IMR-90 (cell line): ENCODE measurements at regions of chr2 and their contacts with region 1.

Region 1: DNA sequence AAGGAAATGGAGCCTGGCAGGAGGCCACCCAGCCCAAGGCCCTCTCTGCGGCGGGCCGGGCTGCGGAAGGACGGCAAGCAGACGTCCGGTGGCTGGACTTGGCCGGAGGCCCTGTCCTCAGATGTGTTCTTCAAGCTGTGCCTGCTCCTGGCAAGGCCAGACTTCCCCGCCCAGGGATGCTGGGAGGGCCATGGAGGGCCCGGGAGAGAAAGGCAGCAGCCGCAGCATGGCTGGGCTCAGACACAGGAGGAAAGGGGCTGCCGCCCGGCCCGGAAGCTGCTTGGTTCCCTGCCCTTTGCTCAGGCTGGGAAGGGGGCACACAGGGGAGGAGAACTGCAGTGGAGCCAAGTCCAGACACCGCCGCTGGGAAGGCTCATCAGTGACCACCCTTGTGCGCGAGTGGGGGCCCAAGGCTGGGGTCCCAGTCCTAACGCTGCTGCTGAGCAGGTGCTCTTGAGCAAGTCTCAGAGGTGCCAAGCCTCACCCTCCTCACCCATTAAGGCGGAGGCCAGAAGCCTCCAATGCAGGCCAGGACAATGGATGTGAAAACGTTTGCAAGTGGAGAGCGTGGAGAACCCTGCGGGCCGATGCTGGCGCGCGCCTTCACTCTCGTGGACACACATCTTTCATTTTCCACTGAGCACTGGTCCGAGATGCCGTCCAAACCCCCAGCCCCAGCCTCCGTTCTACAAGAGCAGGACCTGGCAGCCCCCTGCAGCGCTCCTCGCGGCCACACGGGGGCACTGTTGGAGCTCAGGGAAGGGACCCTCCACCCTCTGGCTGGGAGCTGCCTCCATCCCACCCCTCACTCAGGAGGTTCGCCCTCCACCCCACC is 7.9 kb downstream of the CROCC2 start:
- DNase-seq: peak; percentile 55
- ATAC-seq: peak; percentile 57
- H3K4me3 ChIP-seq: no peak overlapping the region
- H3K27ac ChIP-seq: peak overlapping the region; percentile 7
- H3K4me1 ChIP-seq: peaks cover 38% of the 10 kb centered on the region
- H3K27me3 ChIP-seq: no peaks in the 10 kb centered on the region
- CTCF ChIP-seq: peak; percentile 79
- POLR2A ChIP-seq: no peak
- RAD21 ChIP-seq: peak; percentile 71

Region 2: GRCh38 chr2:239953418-239954061 is 960.5 kb before region 1 on chr2:
- CTCF ChIA-PET with region 1: no interaction called
- POLR2A ChIA-PET with region 1: no interaction called
- dilution Hi-C with region 1: no loop called
- in situ Hi-C with region 1: no loop called
- intact Hi-C with region 1: no loop called
- DNase-seq: peak; percentile 15
- ATAC-seq: peak; percentile 18
- H3K4me3 ChIP-seq: no peak overlapping the region
- H3K27ac ChIP-seq: no peak overlapping the region
- H3K4me1 ChIP-seq: no peaks in the 10 kb centered on the region
- H3K27me3 ChIP-seq: no peaks in the 10 kb centered on the region
- CTCF ChIP-seq: no peak
- POLR2A ChIP-seq: no peak
- RAD21 ChIP-seq: no peak

Region 3: DNA sequence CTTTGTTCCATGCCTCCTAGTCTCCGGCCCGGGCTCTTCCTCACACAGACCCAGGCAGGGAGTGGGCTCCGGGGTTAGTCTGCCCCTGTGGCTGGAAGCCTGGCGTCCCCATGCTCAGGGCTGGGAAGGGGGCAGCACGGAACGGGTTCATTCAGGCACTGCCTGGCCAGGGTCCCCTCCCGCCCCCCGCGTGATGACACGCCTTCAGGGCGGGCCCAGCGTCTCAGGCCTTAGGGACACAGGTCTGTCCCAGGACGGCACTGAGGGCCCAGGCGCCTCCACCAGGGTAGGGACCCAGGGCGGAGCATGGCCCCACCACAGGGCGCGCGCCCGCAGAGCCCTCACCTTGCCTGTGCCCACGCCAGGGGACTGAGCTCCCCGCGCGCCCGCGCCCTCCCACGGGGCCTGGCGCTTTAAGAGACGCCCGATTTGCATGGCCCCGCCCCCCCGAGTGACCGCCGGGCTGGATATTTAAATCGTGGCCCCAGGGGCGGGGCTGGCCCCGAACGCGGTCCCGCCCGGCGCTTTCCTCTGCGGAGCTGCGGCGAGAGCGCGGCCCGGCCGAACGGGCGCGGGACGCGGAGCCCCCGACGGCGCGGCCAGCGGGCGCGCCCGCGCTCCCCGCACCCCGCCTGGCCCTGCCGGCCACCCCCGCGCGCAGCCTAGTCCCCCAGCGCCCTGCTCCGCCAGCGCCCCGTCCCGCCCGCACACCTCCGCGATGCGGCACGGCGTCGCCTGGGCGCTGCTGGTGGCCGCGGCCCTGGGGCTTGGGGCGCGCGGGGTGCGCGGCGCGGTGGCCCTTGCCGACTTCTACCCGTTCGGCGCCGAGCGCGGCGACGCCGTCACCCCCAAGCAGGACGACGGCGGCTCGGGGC is 84.3 kb after region 1 on chr2 and contains the start of gene SNED1:
- CTCF ChIA-PET with region 1: interaction called, 3 read pairs
- POLR2A ChIA-PET with region 1: no interaction called
- dilution Hi-C with region 1: no loop called
- in situ Hi-C with region 1: no loop called
- intact Hi-C with region 1: loop called (anchors 2 kb)
- DNase-seq: peak; percentile 66
- ATAC-seq: peak; percentile 94
- H3K4me3 ChIP-seq: peak within 1 kb of the TSS; percentile 55
- H3K27ac ChIP-seq: peak within 1 kb of the TSS; percentile 62
- H3K4me1 ChIP-seq: peaks cover 26% of the 10 kb centered on the region; the same call in 1 of the 2 replicates
- H3K27me3 ChIP-seq: no peaks in the 10 kb centered on the region
- CTCF ChIP-seq: no peak
- POLR2A ChIP-seq: no peak
- RAD21 ChIP-seq: no peak
- total RNA-seq, gene SNED1: 1.1 and 1.4 TPM in 2 replicates

Region 4: GRCh38 chr2:241074901-241075540 is 161.0 kb after region 1 on chr2:
- CTCF ChIA-PET with region 1: no interaction called
- POLR2A ChIA-PET with region 1: no interaction called
- dilution Hi-C with region 1: no loop called
- in situ Hi-C with region 1: no loop called
- intact Hi-C with region 1: loop called (anchors 5 kb)
- DNase-seq: no peak
- ATAC-seq: no peak
- H3K4me3 ChIP-seq: no peak overlapping the region
- H3K27ac ChIP-seq: no peak overlapping the region
- H3K4me1 ChIP-seq: no peaks in the 10 kb centered on the region
- H3K27me3 ChIP-seq: no peaks in the 10 kb centered on the region
- CTCF ChIP-seq: no peak
- POLR2A ChIP-seq: no peak
- RAD21 ChIP-seq: no peak

Region 5: GRCh38 chr2:241149925-241150659 is 236.1 kb after region 1 on chr2 and contains the start of gene PPP1R7:
- CTCF ChIA-PET with region 1: no interaction called
- POLR2A ChIA-PET with region 1: no interaction called
- dilution Hi-C with region 1: no loop called
- in situ Hi-C with region 1: no loop called
- intact Hi-C with region 1: loop called (anchors 5 kb)
- DNase-seq: peak; percentile 90
- ATAC-seq: peak; percentile 90
- H3K4me3 ChIP-seq: peak within 1 kb of the TSS; percentile 75
- H3K27ac ChIP-seq: peak within 1 kb of the TSS; percentile 16
- H3K4me1 ChIP-seq: peaks cover 7% of the 10 kb centered on the region; the same call in 1 of the 2 replicates
- H3K27me3 ChIP-seq: no peaks in the 10 kb centered on the region
- CTCF ChIP-seq: 0 out of 2 replicates have a peak, but pooled peaks have one; percentile 25
- POLR2A ChIP-seq: peak; percentile 80
- RAD21 ChIP-seq: 0 out of 2 replicates have a peak, but pooled peaks have one; percentile 22
- total RNA-seq, gene PPP1R7: 60.8 and 104 TPM in 2 replicates